Breast epithelium (tissue), 4 donors: ENCODE measurements at regions of chr6 and their contacts with region 1.

Region 1: DNA sequence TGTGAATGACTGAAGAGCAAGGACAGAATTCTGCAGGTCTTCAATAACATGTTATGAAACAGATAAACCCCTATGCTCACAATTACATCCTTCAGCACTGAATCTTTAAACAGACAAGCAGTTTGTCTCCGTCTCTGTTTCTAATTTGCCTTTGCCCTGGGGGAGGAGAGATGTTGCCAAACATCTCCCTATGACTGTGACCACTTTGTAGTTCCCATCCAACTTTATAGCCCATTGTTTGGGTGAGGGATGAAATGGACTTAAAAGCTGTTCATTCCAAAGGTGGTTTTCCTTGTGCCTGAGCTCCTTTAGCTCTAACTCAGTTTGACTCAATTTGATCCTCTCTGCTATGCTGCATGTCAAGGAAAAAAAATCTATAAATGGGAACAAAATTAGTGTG is 19.5 kb upstream of the ADTRP start:
- DNase-seq: no peak
- H3K4me3 ChIP-seq: no peak overlapping the region
- H3K27ac ChIP-seq: no peak overlapping the region
- H3K4me1 ChIP-seq: no peaks in the 10 kb centered on the region
- H3K27me3 ChIP-seq: no peaks in the 10 kb centered on the region
- CTCF ChIP-seq: no peak
- POLR2A ChIP-seq: no peak

Region 2: DNA sequence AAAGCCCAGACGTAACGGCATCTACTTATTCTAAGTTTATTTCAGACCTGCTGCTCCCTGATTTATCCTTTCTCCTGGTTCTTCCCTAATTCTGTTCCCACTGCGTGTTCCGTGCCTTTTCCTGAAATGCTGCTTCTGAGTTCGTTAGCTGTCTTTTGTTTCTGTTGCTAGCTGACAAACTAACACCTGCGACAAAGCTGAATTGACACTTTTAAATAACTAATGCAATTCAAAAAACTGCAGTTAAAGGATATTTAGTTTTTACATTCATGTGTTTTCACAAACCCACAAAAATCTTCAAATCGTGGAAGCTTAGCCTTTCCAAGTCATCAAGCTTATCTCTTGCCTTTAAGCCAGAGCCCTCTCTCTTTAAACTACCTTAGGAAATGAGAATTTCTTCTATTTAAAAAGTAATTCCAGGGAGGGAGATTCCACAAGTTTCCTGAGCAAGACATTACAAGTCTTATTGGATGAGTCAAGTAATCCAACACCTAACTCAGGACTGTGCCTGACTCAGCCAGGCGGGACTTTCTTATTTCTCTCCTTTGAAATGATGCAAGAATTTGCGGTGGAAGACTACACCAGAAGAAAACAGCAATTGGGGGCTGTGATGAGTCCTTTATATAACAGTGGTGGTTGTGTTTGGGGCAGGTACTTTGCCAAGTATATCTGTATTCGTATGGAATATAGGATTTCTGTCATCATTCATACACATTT is 25.8 kb before region 1 on chr6:
- intact Hi-C with region 1: loop called (anchors 2 kb)
- DNase-seq: peak in 1 of 2 donors; percentile 49
- H3K4me3 ChIP-seq: no peak overlapping the region
- H3K27ac ChIP-seq: peak overlapping the region; percentile 89 to 94
- H3K4me1 ChIP-seq: peaks cover 0 to 5% of the 10 kb centered on the region in 2 donors
- H3K27me3 ChIP-seq: no peaks in the 10 kb centered on the region
- CTCF ChIP-seq: no peak
- POLR2A ChIP-seq: no peak